Aorta (tissue), 5 donors: ENCODE measurements at regions of chr12 and their contacts with region 1.

Region 1: DNA sequence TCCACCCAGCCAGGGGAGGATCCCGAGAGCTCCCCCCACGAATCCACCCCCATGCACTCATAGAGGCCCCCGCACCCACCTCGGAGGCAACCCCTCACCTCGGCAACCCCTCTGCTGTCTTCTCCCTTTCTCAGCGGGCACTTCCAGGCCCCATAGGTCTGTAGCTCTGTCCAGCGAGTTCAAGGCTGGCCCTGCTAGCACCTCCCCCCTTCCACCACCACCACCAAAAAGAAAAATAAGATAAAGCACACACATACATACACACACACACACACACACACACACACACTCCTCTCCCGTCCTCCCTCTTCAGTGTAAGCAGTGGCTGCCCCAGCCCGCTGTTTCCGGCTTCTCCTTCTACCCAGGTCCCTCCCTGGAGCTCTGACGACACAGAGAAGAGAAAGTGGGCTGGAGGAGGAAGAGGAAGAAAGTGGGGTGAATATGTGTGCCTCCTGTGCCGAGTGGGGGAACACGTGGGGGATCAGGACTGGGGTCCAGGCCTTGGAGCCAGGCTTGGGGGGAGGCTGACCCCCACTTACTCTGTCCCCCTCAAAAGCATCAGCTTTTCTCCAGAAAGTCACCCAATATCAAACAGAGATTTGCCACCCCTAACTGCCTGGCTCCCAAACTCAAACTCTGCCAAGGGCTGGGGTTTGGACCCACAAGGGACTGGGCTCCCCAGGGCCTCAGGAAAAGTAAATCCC is at the start of gene STAT6:
- DNase-seq: peak; percentile 90 to 92
- ATAC-seq: peak; percentile 86
- H3K4me3 ChIP-seq: peak within 1 kb of the TSS; percentile 61 to 86
- H3K27ac ChIP-seq: peak within 1 kb of the TSS; percentile 59 to 98
- H3K4me1 ChIP-seq: no peaks in the 10 kb centered on the region
- H3K27me3 ChIP-seq: no peaks in the 10 kb centered on the region
- total RNA-seq, gene STAT6: 199 to 258 TPM

Region 2: DNA sequence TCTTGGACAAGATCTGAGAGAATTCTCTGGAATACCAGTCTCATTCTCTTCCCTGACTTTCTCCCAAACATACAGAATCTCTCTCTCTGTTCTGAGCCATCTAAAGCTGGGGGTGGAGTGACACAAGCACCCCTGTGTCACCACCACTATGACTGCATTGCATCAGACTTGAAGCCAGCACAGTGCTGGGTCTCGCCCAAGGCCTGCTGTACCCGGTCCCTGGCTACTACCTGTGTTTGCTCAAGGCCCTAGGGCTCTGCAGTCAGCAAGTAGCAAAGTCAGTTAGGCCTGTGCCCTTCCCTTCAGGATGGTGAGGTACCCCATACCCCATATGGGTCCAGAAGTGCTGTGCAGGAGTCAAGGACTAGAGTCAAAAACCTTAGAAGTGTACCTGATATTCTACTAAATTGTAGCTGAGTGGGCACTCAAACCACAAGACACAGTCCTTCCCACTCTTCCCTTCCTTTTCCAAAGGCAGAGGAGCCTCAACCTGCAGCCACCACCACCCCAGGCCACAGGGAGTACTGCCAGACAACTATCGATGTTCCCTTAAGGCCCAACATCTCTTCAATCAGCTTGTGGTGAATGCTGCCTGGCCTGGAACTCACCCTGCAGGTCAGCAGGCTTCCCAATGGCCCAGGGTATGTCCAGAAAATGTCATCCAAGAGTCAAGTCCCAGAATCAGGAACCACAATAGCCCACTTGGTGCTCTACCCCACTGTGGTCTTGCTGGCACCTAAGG is 132.6 kb before region 1 on chr12:
- intact Hi-C with region 1: no loop called
- DNase-seq: no peak
- ATAC-seq: no peak
- H3K4me3 ChIP-seq: no peak overlapping the region
- H3K27ac ChIP-seq: no peak overlapping the region
- H3K4me1 ChIP-seq: no peaks in the 10 kb centered on the region
- H3K27me3 ChIP-seq: no peaks in the 10 kb centered on the region

Region 3: GRCh38 chr12:56991319-56992246 is 119.6 kb before region 1 on chr12:
- intact Hi-C with region 1: no loop called
- DNase-seq: peak in 1 of 2 donors; percentile 84
- ATAC-seq: peak; percentile 37
- H3K4me3 ChIP-seq: no peak overlapping the region
- H3K27ac ChIP-seq: no peak overlapping the region
- H3K4me1 ChIP-seq: no peaks in the 10 kb centered on the region
- H3K27me3 ChIP-seq: no peaks in the 10 kb centered on the region

Region 4: DNA sequence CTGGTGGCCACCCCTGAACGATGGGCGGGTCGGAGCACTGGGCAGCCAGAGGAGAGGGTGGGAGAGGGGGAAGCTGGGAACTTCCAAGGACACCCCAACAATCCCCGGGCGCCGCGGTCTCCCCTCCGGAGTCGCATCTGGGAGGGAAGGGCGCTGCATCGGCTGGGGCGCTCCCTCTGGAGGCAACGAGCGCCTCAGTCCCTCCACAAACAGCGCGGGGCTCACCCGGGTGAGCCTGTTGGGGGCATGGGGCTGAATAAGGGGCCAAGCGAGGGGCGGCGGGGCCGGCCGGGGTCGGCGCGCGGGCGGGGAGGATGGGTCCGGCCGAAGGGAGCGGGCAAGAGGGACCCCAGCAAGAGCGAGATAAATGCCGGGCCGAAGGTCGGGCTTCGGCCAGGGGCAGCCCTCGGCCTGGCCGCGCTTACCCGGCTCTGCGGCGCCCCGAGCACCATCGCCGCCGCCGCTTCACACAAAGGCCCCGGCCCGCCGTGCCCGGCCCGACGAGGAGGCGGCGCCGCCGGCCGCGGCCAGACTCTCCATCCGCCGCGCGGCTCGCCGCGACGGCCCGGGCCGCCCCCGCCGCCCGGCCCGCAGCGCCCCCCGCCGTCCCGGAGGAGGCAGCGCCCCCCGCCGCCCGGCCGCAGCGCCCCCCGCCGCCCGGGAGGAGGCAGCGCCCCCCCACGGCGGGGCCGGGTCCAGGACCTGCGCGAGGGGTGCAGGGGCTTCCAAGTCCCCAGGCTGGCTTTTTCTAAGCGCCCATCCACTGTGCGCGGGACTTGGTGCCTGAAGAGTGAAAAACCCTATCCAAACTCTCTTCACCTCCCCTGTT is 105.0 kb before region 1 on chr12 and contains the start of gene ZBTB39:
- intact Hi-C with region 1: loop called in 1 of 2 experiments (anchors 5 kb)
- DNase-seq: peak; percentile 62 to 86
- ATAC-seq: peak; percentile 80
- H3K4me3 ChIP-seq: peak within 1 kb of the TSS; percentile 83 to 96
- H3K27ac ChIP-seq: peak within 1 kb of the TSS in 1 of 2 donors; percentile 8
- H3K4me1 ChIP-seq: no peaks in the 10 kb centered on the region
- H3K27me3 ChIP-seq: no peaks in the 10 kb centered on the region
- total RNA-seq, gene ZBTB39: 6.5 to 6.8 TPM

Region 5: GRCh38 chr12:57058454-57058853 is 52.7 kb before region 1 on chr12:
- intact Hi-C with region 1: no loop called
- DNase-seq: no peak
- ATAC-seq: no peak
- H3K4me3 ChIP-seq: no peak overlapping the region
- H3K27ac ChIP-seq: no peak overlapping the region
- H3K4me1 ChIP-seq: no peaks in the 10 kb centered on the region
- H3K27me3 ChIP-seq: no peaks in the 10 kb centered on the region

Region 6: GRCh38 chr12:57069523-57069922 is 41.7 kb before region 1 on chr12:
- intact Hi-C with region 1: loop called (anchors 1 kb)
- DNase-seq: peak in 1 of 2 donors; percentile 76
- ATAC-seq: peak; percentile 96
- H3K4me3 ChIP-seq: no peak overlapping the region
- H3K27ac ChIP-seq: peak overlapping the region; percentile 80 to 88
- H3K4me1 ChIP-seq: peaks cover 0 to 5% of the 10 kb centered on the region in 2 donors
- H3K27me3 ChIP-seq: no peaks in the 10 kb centered on the region

Region 7: DNA sequence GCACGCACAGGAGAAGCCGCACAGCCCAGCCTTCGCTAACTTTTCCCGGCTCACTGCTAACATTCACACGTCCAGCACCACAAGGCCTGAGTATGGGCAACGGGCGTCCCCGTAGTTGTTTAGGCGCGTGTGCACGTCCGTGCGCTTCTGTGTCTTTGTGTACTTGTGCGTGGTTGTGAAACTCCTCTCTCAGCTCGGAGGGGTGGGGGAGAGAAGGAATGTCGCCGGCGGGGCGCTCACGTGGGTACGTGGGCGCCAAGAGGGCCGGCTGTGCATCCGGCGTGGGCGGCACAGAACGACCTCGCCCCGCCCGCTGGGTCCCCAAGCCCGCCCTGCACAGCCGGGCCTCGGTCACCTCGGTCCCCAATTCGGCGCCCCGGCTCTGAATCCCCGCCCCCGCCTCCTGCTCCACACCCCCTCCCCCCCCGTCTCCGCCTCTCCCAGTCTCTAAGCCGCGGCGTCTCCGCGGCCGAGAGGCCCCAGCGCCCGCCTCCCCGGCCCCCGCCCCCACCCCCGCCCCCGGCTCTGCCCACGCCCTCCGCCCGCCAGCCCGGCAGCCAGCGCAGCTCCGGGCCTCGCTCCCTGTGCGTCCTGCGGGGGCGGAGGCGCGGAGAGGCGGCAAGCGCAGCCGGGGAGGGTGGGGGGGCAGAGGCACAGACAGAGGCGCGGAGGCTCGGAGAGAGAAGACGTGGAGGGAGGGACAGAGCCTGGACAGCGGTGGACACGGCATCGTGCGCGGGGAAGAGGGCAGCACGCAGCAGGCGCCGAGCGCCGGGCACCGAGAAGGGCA is 22.5 kb before region 1 on chr12 and contains the start of gene NAB2:
- intact Hi-C with region 1: loop called (anchors 1 to 2 kb)
- DNase-seq: peak; percentile 98
- ATAC-seq: peak; percentile 87
- H3K4me3 ChIP-seq: peak within 1 kb of the TSS; percentile 73 to 92
- H3K27ac ChIP-seq: peak within 1 kb of the TSS; percentile 94
- H3K4me1 ChIP-seq: peaks cover 0 to 6% of the 10 kb centered on the region in 2 donors
- H3K27me3 ChIP-seq: no peaks in the 10 kb centered on the region
- total RNA-seq, gene NAB2: 31.6 to 48.4 TPM